ENCODE measurements at regions of chr4 and their contacts with region 1.

Region 1: GRCh38 chr4:123893011-123893981 is 496.7 kb downstream of the SPRY1 start:
- DNase-seq: peak; percentile 87
- H3K4me3 ChIP-seq: peak overlapping the region in 1 of 3 experiments; percentile 26
- H3K27ac ChIP-seq: peak overlapping the region; percentile 96
- H3K4me1 ChIP-seq: peaks cover 69% of the 10 kb centered on the region
- H3K27me3 ChIP-seq: no peaks in the 10 kb centered on the region
- CTCF ChIP-seq: no peak
- POLR2A ChIP-seq: peak; percentile 43

Region 2: DNA sequence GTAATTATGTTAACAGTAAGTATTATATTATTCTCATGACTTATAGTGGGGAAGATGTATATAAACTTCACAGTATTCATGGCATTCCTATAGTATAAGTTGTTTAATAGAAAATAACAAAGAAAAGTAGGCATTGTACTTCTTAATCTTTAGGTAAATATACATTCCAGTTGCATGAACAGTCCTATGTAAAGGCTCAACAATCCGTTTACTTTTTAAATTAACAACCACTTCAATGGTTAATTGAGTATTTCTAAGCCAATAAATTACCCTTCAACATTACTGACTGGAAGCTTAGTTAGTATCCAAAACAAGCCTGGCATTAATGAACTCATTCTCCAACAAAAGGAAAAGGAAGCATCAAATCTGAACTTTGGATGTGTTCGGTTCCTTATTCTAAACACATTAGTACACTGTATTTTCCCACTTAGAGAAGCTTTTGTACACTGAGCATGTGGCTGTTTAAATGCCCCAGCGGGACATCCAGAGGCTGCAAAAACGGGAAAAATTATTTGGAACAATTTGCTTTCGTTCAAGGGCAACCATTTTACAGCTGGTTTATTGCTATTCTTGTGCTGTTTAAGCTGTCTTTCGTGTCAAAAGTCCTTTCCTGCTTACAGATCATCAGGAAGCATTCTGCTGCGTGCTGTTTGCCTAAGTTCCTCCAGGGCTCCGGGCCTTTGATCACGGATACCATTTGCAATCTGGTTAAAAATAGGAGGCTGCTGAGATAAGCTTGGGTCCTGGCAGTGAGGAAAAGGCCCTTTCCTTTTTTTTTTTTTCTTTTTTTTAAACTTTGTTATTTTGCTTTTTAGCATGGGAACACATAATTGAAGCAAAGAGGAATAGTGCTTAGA is 36.4 kb before region 1 on chr4:
- CTCF ChIA-PET with region 1: no interaction called
- POLR2A ChIA-PET with region 1: no interaction called
- dilution Hi-C with region 1: no loop called
- intact Hi-C with region 1: loop called (anchors 1 kb)
- DNase-seq: peak; percentile 90
- H3K4me3 ChIP-seq: peak overlapping the region in 1 of 3 experiments; percentile 36
- H3K27ac ChIP-seq: peak overlapping the region; percentile 82
- H3K4me1 ChIP-seq: peaks cover 20% of the 10 kb centered on the region
- H3K27me3 ChIP-seq: no peaks in the 10 kb centered on the region
- CTCF ChIP-seq: peak in 1 of 2 donors; percentile 28
- POLR2A ChIP-seq: no peak

Region 3: DNA sequence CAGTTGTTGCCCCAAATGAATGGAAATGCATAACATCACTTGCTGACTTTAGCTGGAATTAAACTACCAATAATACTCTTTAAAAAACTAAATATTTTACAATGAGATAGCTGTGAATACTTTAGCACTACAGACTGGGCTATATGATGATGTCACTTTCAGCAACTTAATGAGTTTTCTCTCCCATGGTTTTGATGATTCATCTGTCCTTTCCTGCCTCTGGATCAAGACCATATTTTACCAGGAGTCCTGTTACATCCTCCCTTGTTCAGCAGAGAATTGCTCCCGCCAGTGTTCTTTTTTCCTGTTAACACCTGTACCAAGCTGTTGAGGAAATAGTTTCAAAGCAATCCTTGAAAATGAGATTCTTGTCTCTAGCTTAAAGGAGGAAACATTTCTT is 46.3 kb after region 1 on chr4:
- CTCF ChIA-PET with region 1: no interaction called
- POLR2A ChIA-PET with region 1: no interaction called
- dilution Hi-C with region 1: no loop called
- intact Hi-C with region 1: loop called (anchors 1 kb)
- DNase-seq: peak; percentile 86
- H3K4me3 ChIP-seq: no peak overlapping the region
- H3K27ac ChIP-seq: peak overlapping the region; percentile 79
- H3K4me1 ChIP-seq: peaks cover 35% of the 10 kb centered on the region
- H3K27me3 ChIP-seq: no peaks in the 10 kb centered on the region
- CTCF ChIP-seq: no peak
- POLR2A ChIP-seq: no peak

Region 4: GRCh38 chr4:123953566-123953965 is 60.3 kb after region 1 on chr4:
- CTCF ChIA-PET with region 1: no interaction called
- POLR2A ChIA-PET with region 1: no interaction called
- dilution Hi-C with region 1: no loop called
- intact Hi-C with region 1: no loop called
- DNase-seq: no peak
- H3K4me3 ChIP-seq: no peak overlapping the region
- H3K27ac ChIP-seq: no peak overlapping the region
- H3K4me1 ChIP-seq: no peaks in the 10 kb centered on the region
- H3K27me3 ChIP-seq: no peaks in the 10 kb centered on the region
- CTCF ChIP-seq: no peak
- POLR2A ChIP-seq: no peak

Region 5: DNA sequence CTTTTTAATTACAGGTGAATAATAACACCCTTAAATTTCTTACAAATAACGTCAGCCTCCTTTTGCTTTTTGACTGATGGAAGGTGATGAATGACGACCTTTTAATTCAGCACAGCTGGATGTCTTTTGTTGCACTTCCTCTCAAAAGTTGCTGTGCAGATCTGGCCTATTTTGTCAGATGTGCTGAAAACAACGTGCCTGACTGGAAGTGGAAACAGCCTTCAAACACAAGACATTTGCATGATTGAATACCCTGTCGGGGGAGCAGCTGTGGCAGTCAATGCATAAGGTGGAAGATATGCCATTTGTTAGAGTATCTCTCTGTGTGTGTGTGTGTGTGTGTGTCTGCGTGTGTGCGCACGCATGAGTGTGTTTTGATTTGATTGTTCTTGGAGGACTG is 83.0 kb after region 1 on chr4:
- CTCF ChIA-PET with region 1: no interaction called
- POLR2A ChIA-PET with region 1: no interaction called
- dilution Hi-C with region 1: no loop called
- intact Hi-C with region 1: loop called (anchors 1 kb)
- DNase-seq: peak; percentile 90
- H3K4me3 ChIP-seq: no peak overlapping the region
- H3K27ac ChIP-seq: peak overlapping the region; percentile 70
- H3K4me1 ChIP-seq: peaks cover 30% of the 10 kb centered on the region
- H3K27me3 ChIP-seq: no peaks in the 10 kb centered on the region
- CTCF ChIP-seq: no peak
- POLR2A ChIP-seq: no peak

Region 6: DNA sequence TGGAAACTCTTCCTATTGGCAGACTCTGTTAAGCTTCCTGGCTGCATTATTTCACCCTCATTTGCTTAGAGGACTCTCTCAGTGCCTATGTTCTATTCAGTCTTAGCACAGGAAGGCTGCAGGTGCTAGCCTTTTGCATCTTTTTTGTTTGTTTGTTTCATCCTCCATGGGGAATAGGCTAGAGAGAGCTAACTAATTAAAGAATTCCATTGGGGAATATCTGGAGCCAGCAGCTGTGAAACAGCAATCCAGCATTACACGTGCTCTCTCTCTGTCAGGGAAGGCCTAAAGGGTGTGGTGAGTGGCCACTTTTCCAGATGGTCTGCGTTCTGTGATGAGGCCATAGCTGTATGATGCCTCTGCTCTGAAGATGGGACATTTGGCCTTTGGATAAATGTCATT is 136.9 kb after region 1 on chr4:
- CTCF ChIA-PET with region 1: no interaction called
- POLR2A ChIA-PET with region 1: no interaction called
- dilution Hi-C with region 1: no loop called
- intact Hi-C with region 1: no loop called
- DNase-seq: no peak
- H3K4me3 ChIP-seq: no peak overlapping the region
- H3K27ac ChIP-seq: no peak overlapping the region
- H3K4me1 ChIP-seq: no peaks in the 10 kb centered on the region
- H3K27me3 ChIP-seq: no peaks in the 10 kb centered on the region
- CTCF ChIP-seq: no peak
- POLR2A ChIP-seq: no peak